H1 (cell line): ENCODE measurements at regions of chr11 and their contacts with region 1.

Region 1: GRCh38 chr11:75413864-75414263 is 14.5 kb downstream of the RPS3 start:
- DNase-seq: no peak
- H3K4me3 ChIP-seq: no peak overlapping the region
- H3K27ac ChIP-seq: no peak overlapping the region
- H3K4me1 ChIP-seq: no peaks in the 10 kb centered on the region
- H3K27me3 ChIP-seq: no peaks in the 10 kb centered on the region
- CTCF ChIP-seq: no peak
- EP300 ChIP-seq: no peak
- POLR2A ChIP-seq: no peak
- RAD21 ChIP-seq: no peak

Region 2: GRCh38 chr11:75063732-75064314 is 350.0 kb before region 1 on chr11:
- CTCF ChIA-PET with region 1: no interaction called
- POLR2A ChIA-PET with region 1: no interaction called
- DNase-seq: no peak
- H3K4me3 ChIP-seq: no peak overlapping the region
- H3K27ac ChIP-seq: no peak overlapping the region
- H3K4me1 ChIP-seq: no peaks in the 10 kb centered on the region
- H3K27me3 ChIP-seq: no peaks in the 10 kb centered on the region
- CTCF ChIP-seq: no peak
- EP300 ChIP-seq: no peak
- POLR2A ChIP-seq: no peak
- RAD21 ChIP-seq: no peak

Region 3: DNA sequence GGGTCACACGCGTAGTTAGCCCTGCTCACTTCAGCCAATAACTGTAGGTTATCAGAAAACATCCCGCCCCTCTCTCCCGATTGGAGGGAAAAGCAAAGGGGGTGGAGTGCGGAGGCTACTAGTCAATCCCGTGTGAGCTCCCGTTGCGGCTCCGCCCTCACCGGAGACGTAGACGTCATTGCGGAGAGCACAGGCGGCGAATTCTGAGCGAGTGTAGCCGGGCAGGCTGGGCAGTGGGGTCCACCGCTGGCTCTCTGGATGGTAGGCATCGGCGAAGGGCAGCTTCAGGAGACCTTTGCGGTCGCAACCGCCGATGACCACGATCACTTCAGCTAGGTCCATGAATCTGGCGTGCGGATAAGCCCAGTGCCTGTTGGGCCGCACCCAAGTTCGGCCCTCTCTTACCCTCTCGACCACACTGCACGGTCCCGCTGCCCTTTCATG is 14.4 kb after region 1 on chr11:
- CTCF ChIA-PET with region 1: interaction called, 39 read pairs
- POLR2A ChIA-PET with region 1: interaction called, 570 read pairs
- DNase-seq: no peak
- H3K4me3 ChIP-seq: no peak overlapping the region
- H3K27ac ChIP-seq: no peak overlapping the region
- H3K4me1 ChIP-seq: peaks cover 0 to 23% (median 15%) of the 10 kb centered on the region in 4 experiments; a peak in 6 of 7 replicates
- H3K27me3 ChIP-seq: peaks cover 47 to 66% (median 60%) of the 10 kb centered on the region in 4 experiments
- CTCF ChIP-seq: no peak
- EP300 ChIP-seq: no peak
- POLR2A ChIP-seq: no peak
- RAD21 ChIP-seq: no peak